ENCODE measurements at regions of chr10 and their contacts with region 1.

Region 1: DNA sequence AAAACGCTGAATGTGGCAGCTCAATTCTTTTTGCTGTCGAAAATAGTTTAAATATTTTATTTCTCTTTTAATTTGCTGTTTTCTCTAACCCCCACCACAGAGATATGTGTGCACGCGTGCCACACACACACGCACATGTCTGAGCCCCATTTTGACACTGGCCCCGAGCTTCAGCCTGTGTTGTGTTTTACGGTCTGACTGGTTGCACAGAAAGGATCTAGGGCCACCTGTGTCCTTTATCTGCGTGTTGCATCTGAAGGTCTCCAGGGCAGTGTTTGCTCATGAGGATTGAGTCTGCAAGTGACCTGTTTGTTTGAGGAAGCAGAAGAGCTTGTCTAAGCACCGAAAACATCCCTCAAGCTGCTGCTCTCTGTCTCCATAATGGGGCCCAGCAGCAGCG is 266.4 kb upstream of the LYZL1 start:
- DNase-seq: peak; percentile 63 to 73
- H3K4me3 ChIP-seq: no peak overlapping the region
- H3K4me3 Mint-ChIP-seq: peak overlapping the region; percentile 35
- H3K27ac Mint-ChIP-seq: peak overlapping the region; percentile 72
- H3K4me1 ChIP-seq: peaks cover 36% of the 10 kb centered on the region
- H3K4me1 Mint-ChIP-seq: peaks cover 33% of the 10 kb centered on the region
- H3K27me3 ChIP-seq: no peaks in the 10 kb centered on the region
- H3K27me3 Mint-ChIP-seq: no peaks in the 10 kb centered on the region
- CTCF ChIP-seq: no peak

Region 2: GRCh38 chr10:28975891-28976531 is 46.5 kb before region 1 on chr10:
- CTCF ChIA-PET with region 1: no interaction called
- POLR2A ChIA-PET with region 1: no interaction called
- intact Hi-C with region 1: no loop called
- DNase-seq: no peak
- H3K4me3 ChIP-seq: no peak overlapping the region
- H3K4me3 Mint-ChIP-seq: no peak overlapping the region
- H3K27ac Mint-ChIP-seq: no peak overlapping the region
- H3K4me1 ChIP-seq: no peaks in the 10 kb centered on the region
- H3K4me1 Mint-ChIP-seq: no peaks in the 10 kb centered on the region
- H3K27me3 ChIP-seq: no peaks in the 10 kb centered on the region
- H3K27me3 Mint-ChIP-seq: no peaks in the 10 kb centered on the region
- CTCF ChIP-seq: no peak

Region 3: DNA sequence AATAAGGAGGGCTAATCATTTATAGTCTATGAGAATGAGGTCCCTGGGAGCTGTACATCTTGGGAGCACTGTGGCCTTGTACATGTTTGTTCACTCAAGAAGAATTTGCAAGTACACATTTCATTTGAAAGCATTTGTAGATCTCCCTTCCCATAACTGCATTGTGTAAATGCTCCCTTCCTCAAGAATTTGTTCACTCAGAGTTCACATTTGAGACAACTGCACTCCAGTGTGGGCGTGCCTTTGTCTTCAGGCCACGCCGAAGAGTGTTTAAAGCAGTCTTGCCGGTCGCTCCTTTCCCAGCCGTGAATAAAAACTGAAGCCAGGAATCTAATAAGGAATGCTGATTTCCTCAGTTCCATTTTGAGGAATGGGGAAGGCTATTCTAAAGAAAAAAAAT is 24.7 kb before region 1 on chr10:
- CTCF ChIA-PET with region 1: no interaction called
- POLR2A ChIA-PET with region 1: no interaction called
- intact Hi-C with region 1: no loop called
- DNase-seq: peak; percentile 46 to 54
- H3K4me3 ChIP-seq: no peak overlapping the region
- H3K4me3 Mint-ChIP-seq: no peak overlapping the region
- H3K27ac Mint-ChIP-seq: peak overlapping the region; percentile 3
- H3K4me1 ChIP-seq: peaks cover 16% of the 10 kb centered on the region
- H3K4me1 Mint-ChIP-seq: peaks cover 25% of the 10 kb centered on the region
- H3K27me3 ChIP-seq: no peaks in the 10 kb centered on the region
- H3K27me3 Mint-ChIP-seq: no peaks in the 10 kb centered on the region
- CTCF ChIP-seq: no peak

Region 4: DNA sequence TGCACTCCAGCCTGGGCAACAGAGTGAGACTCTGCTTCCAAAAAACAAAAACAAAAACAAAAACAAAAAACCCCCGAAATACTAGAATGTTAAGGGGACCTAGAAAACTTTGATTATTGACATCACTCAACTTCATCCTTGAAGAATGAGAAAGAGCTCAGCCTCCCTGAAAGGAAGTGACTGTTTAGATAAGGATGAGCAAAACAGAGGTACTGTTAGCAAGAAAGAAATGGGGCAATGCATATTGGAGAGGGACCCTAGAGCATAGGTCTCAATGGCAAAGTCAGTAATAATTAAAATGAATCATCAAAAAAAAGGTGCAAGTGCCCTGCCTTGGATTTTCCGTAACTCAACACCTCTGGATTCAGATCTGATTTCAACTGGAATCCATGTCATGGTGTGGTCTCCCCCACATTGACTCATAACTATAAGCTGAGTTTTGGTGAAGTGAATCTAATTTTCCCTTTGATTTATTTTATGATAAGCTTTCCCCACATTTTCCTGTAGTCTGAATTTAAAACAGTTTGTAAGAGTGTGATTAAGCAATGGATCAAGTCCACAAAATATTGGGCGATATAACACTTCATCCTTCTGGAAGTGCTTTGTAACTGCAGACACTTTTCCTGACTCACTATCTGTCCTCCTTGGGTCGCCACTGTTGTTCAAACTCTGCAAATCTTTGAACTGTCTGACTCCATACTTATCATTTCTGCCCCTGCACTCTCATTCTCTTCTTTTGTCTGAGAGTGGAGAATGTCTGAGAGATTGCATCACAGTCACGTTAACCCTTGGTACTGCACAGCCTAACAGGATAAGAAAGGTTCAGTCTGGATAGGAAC is 41.6 kb after region 1 on chr10:
- CTCF ChIA-PET with region 1: no interaction called
- POLR2A ChIA-PET with region 1: interaction called, 11 read pairs
- intact Hi-C with region 1: no loop called
- DNase-seq: peak; percentile 87 to 89
- H3K4me3 ChIP-seq: 0 out of 2 replicates have a peak overlapping the region, but pooled peaks have one; percentile 14
- H3K4me3 Mint-ChIP-seq: peak overlapping the region; percentile 32
- H3K27ac Mint-ChIP-seq: peak overlapping the region; percentile 68
- H3K4me1 ChIP-seq: peaks cover 60% of the 10 kb centered on the region
- H3K4me1 Mint-ChIP-seq: peaks cover 41% of the 10 kb centered on the region
- H3K27me3 ChIP-seq: no peaks in the 10 kb centered on the region
- H3K27me3 Mint-ChIP-seq: no peaks in the 10 kb centered on the region
- CTCF ChIP-seq: peak; percentile 19 to 47

Measured in Caco-2 (cell line).